IMR-90 (cell line): ENCODE measurements at regions of chr9 and their contacts with region 1.

Region 1: GRCh38 chr9:95004411-95005277 is 278.1 kb downstream of the AOPEP start:
- DNase-seq: no peak
- ATAC-seq: peak; percentile 70
- H3K4me3 ChIP-seq: peak overlapping the region; percentile 92
- H3K27ac ChIP-seq: peak overlapping the region; percentile 99
- H3K4me1 ChIP-seq: peaks cover 3% of the 10 kb centered on the region; the same call in 1 of the 2 replicates
- H3K27me3 ChIP-seq: no peaks in the 10 kb centered on the region
- CTCF ChIP-seq: no peak
- POLR2A ChIP-seq: no peak; the same call in none of the 2 replicates
- RAD21 ChIP-seq: no peak

Region 2: DNA sequence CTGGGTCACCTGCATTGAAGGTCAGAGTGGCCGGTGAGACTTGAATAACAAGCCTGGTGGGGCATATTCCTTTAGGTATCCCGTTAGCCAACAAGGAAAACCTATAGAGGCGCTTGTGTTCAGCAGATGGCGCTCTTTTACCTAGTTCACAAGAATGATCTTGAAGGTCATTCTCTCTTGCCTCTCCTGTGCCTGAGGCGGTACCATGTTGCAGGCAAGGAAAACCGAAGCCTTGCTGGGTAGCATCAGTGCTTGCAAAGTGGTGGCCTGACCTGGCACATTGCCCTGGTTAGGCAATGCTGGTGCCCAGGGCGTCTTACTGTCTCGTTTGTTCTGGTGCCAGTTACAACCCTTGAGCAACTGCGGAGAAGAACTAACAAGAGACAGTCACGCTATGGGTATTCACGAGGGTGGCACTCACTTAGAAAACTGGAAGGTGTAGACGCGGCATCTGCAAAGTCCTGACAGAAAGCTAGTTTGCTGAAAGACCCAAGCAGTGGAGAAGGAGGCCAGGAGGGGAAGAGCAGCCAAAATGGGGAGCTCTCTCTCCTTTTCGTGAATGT is 221.5 kb before region 1 on chr9:
- CTCF ChIA-PET with region 1: no interaction called
- POLR2A ChIA-PET with region 1: no interaction called
- dilution Hi-C with region 1: no loop called
- in situ Hi-C with region 1: no loop called
- intact Hi-C with region 1: loop called (anchors 1 kb)
- DNase-seq: peak; percentile 87
- ATAC-seq: peak; percentile 92
- H3K4me3 ChIP-seq: no peak overlapping the region
- H3K27ac ChIP-seq: peak overlapping the region; percentile 67
- H3K4me1 ChIP-seq: peaks cover 9% of the 10 kb centered on the region
- H3K27me3 ChIP-seq: no peaks in the 10 kb centered on the region
- CTCF ChIP-seq: peak; percentile 77
- POLR2A ChIP-seq: peak; percentile 54; the same call in 1 of the 2 replicates
- RAD21 ChIP-seq: peak; percentile 90

Region 3: DNA sequence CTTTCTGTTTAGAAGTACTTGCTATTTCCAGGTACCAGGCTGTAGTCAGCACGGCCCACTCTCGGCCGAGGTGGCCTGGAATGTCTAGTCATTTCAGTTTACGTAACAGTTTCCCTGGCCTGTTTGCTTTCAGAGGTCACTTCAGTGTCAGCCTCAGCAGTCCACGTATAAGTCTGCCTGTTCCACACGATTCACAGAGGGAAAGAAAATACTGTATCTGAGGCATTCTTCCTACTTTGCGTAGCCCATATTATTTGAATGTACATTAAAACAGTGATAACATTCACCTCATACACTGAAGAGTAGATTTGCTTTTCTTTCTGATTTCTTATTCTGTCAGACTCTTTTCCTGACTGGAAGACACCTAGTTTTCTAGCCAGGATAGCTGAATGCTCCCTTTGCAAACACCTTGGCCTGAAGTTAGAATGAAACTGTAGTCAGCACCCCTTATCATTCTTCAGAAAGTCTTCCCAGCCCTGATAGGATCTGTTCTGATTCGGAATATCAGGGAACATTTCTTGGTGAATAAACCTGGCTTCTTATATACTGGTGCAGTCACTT is 137.3 kb before region 1 on chr9:
- CTCF ChIA-PET with region 1: no interaction called
- POLR2A ChIA-PET with region 1: no interaction called
- dilution Hi-C with region 1: no loop called
- in situ Hi-C with region 1: no loop called
- intact Hi-C with region 1: loop called (anchors 2 kb)
- DNase-seq: peak; percentile 91
- ATAC-seq: peak; percentile 49
- H3K4me3 ChIP-seq: no peak overlapping the region
- H3K27ac ChIP-seq: peak overlapping the region; percentile 59
- H3K4me1 ChIP-seq: peaks cover 19% of the 10 kb centered on the region
- H3K27me3 ChIP-seq: no peaks in the 10 kb centered on the region
- CTCF ChIP-seq: no peak
- POLR2A ChIP-seq: peak; percentile 25; the same call in 1 of the 2 replicates
- RAD21 ChIP-seq: peak; percentile 19

Region 4: GRCh38 chr9:95048225-95049087 is 43.8 kb after region 1 on chr9:
- CTCF ChIA-PET with region 1: interaction called, 8 read pairs
- POLR2A ChIA-PET with region 1: no interaction called
- dilution Hi-C with region 1: no loop called
- in situ Hi-C with region 1: no loop called
- intact Hi-C with region 1: loop called (anchors 2 kb)
- DNase-seq: no peak
- ATAC-seq: peak; percentile 79
- H3K4me3 ChIP-seq: peak overlapping the region; percentile 81
- H3K27ac ChIP-seq: peak overlapping the region; percentile 90
- H3K4me1 ChIP-seq: peaks cover 16% of the 10 kb centered on the region
- H3K27me3 ChIP-seq: no peaks in the 10 kb centered on the region
- CTCF ChIP-seq: no peak
- POLR2A ChIP-seq: no peak; the same call in none of the 2 replicates
- RAD21 ChIP-seq: no peak

Region 5: GRCh38 chr9:95206143-95206542 is 201.5 kb after region 1 on chr9:
- CTCF ChIA-PET with region 1: no interaction called
- POLR2A ChIA-PET with region 1: no interaction called
- dilution Hi-C with region 1: no loop called
- in situ Hi-C with region 1: no loop called
- intact Hi-C with region 1: no loop called
- DNase-seq: peak; percentile 36
- ATAC-seq: peak; percentile 92
- H3K4me3 ChIP-seq: no peak overlapping the region
- H3K27ac ChIP-seq: no peak overlapping the region
- H3K4me1 ChIP-seq: peaks cover 6% of the 10 kb centered on the region; the same call in 1 of the 2 replicates
- H3K27me3 ChIP-seq: no peaks in the 10 kb centered on the region
- CTCF ChIP-seq: no peak
- POLR2A ChIP-seq: no peak
- RAD21 ChIP-seq: no peak

Region 6: GRCh38 chr9:95242613-95243012 is 238.0 kb after region 1 on chr9:
- CTCF ChIA-PET with region 1: no interaction called
- POLR2A ChIA-PET with region 1: no interaction called
- dilution Hi-C with region 1: no loop called
- in situ Hi-C with region 1: no loop called
- intact Hi-C with region 1: no loop called
- DNase-seq: no peak
- ATAC-seq: no peak
- H3K4me3 ChIP-seq: no peak overlapping the region
- H3K27ac ChIP-seq: no peak overlapping the region
- H3K4me1 ChIP-seq: no peaks in the 10 kb centered on the region
- H3K27me3 ChIP-seq: no peaks in the 10 kb centered on the region
- CTCF ChIP-seq: no peak
- POLR2A ChIP-seq: no peak
- RAD21 ChIP-seq: no peak

Region 7: GRCh38 chr9:95505717-95506427 is 501.2 kb after region 1 on chr9:
- CTCF ChIA-PET with region 1: no interaction called
- POLR2A ChIA-PET with region 1: interaction called, 25 read pairs
- dilution Hi-C with region 1: no loop called
- in situ Hi-C with region 1: no loop called
- intact Hi-C with region 1: no loop called
- DNase-seq: peak; percentile 63
- ATAC-seq: peak; percentile 12; the same call in 1 of the 2 replicates
- H3K4me3 ChIP-seq: peak overlapping the region; percentile 84
- H3K27ac ChIP-seq: peak overlapping the region; percentile 88
- H3K4me1 ChIP-seq: peaks cover 5% of the 10 kb centered on the region
- H3K27me3 ChIP-seq: no peaks in the 10 kb centered on the region
- CTCF ChIP-seq: no peak
- POLR2A ChIP-seq: no peak
- RAD21 ChIP-seq: no peak